A549 (cell line): ENCODE measurements at regions of chr20 and their contacts with region 1.

Region 1: DNA sequence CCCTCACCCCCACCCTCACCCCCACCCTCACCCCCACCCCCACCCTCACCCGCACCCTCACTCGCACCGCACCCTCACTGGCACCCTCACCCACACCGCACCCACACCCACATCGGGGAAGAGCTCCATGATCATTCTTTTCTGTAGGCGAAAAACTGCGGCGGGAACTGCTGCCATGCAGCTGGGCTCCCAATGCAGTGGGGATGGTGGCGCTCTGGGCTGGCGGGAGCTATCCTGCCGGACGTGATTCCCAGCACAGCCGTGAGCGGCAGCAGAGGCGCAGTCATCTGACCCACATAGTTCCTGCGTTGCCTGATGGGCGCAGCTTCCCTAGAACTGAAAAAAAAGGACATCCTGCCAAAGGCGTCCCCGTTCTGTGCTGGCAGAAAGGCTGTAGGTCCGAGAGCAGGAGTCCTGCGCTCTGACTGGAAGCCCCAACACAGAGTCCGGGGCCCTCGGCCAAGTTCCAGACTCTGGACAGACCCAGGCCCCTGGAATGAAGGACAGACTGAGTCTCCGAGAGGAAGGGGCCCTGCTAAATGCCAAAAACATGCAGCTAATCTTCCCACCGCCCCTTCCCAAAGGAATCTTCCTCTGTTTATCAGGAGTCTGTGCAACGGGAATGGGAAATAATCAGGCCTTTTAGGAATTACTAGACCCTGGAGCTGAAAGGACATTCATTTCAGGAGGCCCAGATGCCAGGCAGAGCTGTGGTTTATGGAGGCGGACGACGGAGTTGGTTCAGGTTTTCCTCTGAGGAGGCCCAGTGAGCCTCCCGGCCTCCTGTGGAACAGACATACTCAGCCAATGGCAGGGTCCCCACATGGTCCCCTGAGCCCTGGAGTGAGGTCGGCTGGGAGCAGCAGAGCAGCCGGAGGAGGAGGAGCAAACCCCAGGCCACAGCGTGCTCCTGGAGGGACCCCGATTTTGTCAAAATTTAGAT is 14.1 kb upstream of the TCFL5 start:
- DNase-seq: peak; percentile 91 to 94
- ATAC-seq: peak; percentile 94
- H3K4me3 ChIP-seq: peak overlapping the region; percentile 35
- H3K27ac ChIP-seq: peak overlapping the region; percentile 84 to 89
- H3K4me1 ChIP-seq: peaks cover 15% of the 10 kb centered on the region
- CTCF ChIP-seq: peak; percentile 41
- EP300 ChIP-seq: no peak
- POLR2A ChIP-seq: no peak
- RAD21 ChIP-seq: peak in 1 of 2 experiments; percentile 24; a peak in 1 of 5 replicates

Region 2: GRCh38 chr20:62861726-62862336 is 13.9 kb before region 1 on chr20 and contains the start of gene TCFL5:
- CTCF ChIA-PET with region 1: interaction called, 40 read pairs
- POLR2A ChIA-PET with region 1: interaction called, 4 read pairs
- DNase-seq: peak; percentile 68 to 90
- ATAC-seq: peak; percentile 89
- H3K4me3 ChIP-seq: peak within 1 kb of the TSS; percentile 81
- H3K27ac ChIP-seq: peak within 1 kb of the TSS; percentile 75 to 91
- H3K4me1 ChIP-seq: peaks cover 13% of the 10 kb centered on the region
- CTCF ChIP-seq: no peak
- EP300 ChIP-seq: no peak
- POLR2A ChIP-seq: no peak; the same call in 1 of the 2 replicates
- RAD21 ChIP-seq: no peak
- polyA plus RNA-seq, gene TCFL5: 7.1 and 7.3 TPM in 2 replicates

Region 3: DNA sequence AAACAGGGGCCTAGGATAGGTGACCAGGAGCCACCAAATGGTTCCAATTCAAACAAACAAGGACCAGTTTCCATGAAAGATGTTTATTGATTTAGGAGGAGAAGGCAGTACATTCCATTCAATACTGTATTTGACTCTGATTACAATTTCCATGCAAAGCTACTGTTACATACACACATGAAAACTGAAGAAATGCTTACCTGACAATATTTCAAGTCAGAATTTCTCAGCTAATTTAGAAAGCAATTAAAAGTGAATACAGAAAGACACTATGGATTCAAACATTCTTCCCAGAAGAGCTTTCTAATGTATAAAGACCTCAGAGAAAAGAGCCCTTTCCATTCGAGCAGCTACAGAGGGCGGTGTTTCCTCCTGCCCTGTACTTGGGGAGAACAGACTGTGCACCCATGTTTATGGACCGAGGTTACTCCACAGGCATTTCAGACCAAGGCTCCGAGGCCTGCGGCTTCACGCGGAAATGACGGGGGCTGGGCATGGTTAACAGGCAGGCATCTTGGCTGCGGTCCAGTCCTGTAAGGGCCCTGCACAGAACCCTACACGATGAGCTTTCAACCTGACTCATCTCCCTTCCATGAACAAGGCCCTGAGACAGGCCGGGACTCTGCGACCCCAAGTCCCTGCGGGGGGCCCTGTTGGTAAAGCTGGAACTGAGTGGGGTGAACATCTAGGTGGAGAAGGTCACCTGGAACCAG is 11.6 kb after region 1 on chr20:
- CTCF ChIA-PET with region 1: interaction called, 121 read pairs
- POLR2A ChIA-PET with region 1: interaction called, 6 read pairs
- DNase-seq: no peak
- ATAC-seq: peak in 1 of 2 experiments; percentile 24; a peak in 2 of 6 replicates
- H3K4me3 ChIP-seq: no peak overlapping the region
- H3K27ac ChIP-seq: no peak overlapping the region
- H3K4me1 ChIP-seq: no peaks in the 10 kb centered on the region
- CTCF ChIP-seq: no peak
- EP300 ChIP-seq: no peak
- POLR2A ChIP-seq: no peak
- RAD21 ChIP-seq: no peak

Region 4: GRCh38 chr20:62900052-62900691 is 24.5 kb after region 1 on chr20:
- CTCF ChIA-PET with region 1: interaction called, 121 read pairs
- POLR2A ChIA-PET with region 1: no interaction called
- DNase-seq: peak; percentile 59 to 92
- ATAC-seq: peak; percentile 93 to 94
- H3K4me3 ChIP-seq: no peak overlapping the region
- H3K27ac ChIP-seq: no peak overlapping the region
- H3K4me1 ChIP-seq: peaks cover 5% of the 10 kb centered on the region; the same call in 2 of the 3 replicates
- CTCF ChIP-seq: peak; percentile 64
- EP300 ChIP-seq: no peak
- POLR2A ChIP-seq: no peak
- RAD21 ChIP-seq: peak; percentile 59 to 62

Region 5: DNA sequence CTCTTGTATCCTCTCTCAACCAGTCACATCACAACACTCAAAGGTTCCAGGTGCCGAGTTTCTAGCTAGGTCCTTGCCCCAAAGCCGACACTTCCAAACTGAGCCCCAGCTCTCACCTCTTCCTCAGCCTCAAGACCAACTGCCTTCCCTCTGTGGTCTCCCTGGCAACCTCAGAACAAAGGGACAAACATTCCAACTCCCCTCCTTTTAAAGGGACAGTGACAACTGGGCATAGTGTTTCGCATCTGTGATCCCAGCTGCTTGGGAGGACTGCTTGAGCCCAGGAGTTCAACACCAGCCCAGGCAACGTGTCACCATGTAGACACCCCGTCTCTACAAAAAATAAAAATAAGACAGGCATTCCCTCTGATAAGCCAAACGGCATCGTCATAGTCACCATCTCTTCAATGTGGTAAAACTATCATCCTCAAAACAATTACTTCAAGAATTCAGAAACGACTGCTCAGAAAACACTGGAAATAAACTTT is 39.3 kb after region 1 on chr20:
- CTCF ChIA-PET with region 1: interaction called, 12 read pairs
- POLR2A ChIA-PET with region 1: no interaction called
- DNase-seq: peak; percentile 41 to 63
- ATAC-seq: peak in 1 of 2 experiments; percentile 79; a peak in 3 of 6 replicates
- H3K4me3 ChIP-seq: no peak overlapping the region
- H3K27ac ChIP-seq: no peak overlapping the region
- H3K4me1 ChIP-seq: peaks cover 39% of the 10 kb centered on the region
- CTCF ChIP-seq: no peak
- EP300 ChIP-seq: no peak
- POLR2A ChIP-seq: no peak
- RAD21 ChIP-seq: no peak

Region 6: GRCh38 chr20:62937366-62938104 is 61.8 kb after region 1 on chr20:
- CTCF ChIA-PET with region 1: interaction called, 8 read pairs
- POLR2A ChIA-PET with region 1: interaction called, 12 read pairs
- DNase-seq: peak; percentile 83 to 96
- ATAC-seq: peak; percentile 93
- H3K4me3 ChIP-seq: peak overlapping the region; percentile 68
- H3K27ac ChIP-seq: peak overlapping the region; percentile 91 to 94
- H3K4me1 ChIP-seq: peaks cover 28% of the 10 kb centered on the region
- CTCF ChIP-seq: no peak
- EP300 ChIP-seq: no peak
- POLR2A ChIP-seq: peak; percentile 75
- RAD21 ChIP-seq: no peak